Dorsolateral prefrontal cortex (tissue), 120 donors: ENCODE measurements at regions of chr11 and their contacts with region 1.

Region 1: DNA sequence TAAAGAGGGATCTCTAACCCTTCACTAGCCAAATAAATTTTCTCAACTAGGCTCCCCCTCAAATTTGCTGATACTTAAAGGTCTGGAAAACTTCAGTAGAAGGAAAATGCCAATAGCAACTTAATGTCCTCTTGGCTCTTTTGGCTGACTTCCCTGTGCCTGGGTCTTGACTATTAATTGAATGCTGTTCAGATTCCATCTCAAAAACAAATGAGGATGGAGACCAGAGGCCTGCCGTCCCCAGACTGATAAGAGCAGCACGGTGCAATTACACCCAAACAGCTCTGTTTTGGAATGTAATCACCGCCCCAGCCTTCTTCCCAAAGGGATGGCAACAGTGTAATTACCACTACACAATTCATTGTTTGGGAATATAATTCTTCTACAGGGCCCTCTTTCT is 89.3 kb upstream of the CHRM4 start:
- DNase-seq: no peak
- H3K4me3 ChIP-seq: no peak overlapping the region
- H3K27ac ChIP-seq: no peak overlapping the region
- H3K27me3 ChIP-seq: no peaks in the 10 kb centered on the region
- CTCF ChIP-seq: no peak

Region 2: GRCh38 chr11:46404476-46405017 is 76.4 kb before region 1 on chr11:
- intact Hi-C with region 1: loop called in 1 of 2 experiments (anchors 5 kb)
- DNase-seq: peak in 1 of 10 donors; percentile 23
- H3K4me3 ChIP-seq: no peak overlapping the region
- H3K27ac ChIP-seq: no peak overlapping the region
- H3K27me3 ChIP-seq: no peaks in the 10 kb centered on the region
- CTCF ChIP-seq: no peak

Region 3: DNA sequence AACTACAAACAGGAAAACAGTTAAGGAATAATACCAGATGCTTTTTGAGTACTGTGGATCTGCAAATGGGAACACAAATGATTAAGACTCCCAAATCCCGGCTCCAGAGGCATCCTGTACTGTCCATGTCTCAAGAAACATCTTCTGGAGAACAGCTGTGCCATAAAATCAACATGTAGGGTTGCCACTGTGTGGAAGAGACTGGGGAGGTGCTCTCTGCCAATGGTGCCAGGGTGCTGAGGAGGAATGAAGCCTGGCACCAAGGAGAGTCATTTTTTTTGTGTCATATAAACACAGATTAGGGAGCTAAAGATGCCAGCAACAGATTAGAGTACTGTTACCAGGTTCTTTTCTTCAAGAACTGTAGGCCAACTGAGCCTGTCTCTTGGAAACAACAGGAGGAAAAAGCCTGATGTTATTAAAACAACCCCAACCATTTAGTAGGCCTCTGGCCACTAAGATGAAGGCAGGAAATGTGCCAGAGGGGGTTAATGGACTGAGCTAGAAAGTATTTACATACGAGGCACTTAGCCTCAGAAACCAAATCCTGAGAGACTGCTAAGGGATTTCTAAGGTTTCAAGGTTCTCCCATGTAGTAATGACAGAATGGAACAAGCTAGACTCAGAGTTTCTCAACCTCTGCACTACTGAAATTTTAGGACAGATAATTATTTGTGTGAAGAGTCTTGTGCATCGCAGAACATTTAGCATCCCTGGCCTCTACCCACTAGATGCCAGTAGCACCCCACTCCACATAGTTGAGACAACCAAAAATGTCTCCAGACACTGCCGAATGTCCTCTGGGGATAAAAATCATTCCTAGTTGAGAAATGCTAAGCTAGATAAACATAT is 34.8 kb before region 1 on chr11:
- intact Hi-C with region 1: no loop called
- DNase-seq: no peak
- H3K4me3 ChIP-seq: no peak overlapping the region
- H3K27ac ChIP-seq: peak overlapping the region in 34 of 59 donors; percentile 2 to 74 (median 28)
- H3K27me3 ChIP-seq: no peaks in the 10 kb centered on the region
- CTCF ChIP-seq: peak in 46 of 56 donors; percentile 11 to 65 (median 39)